GM10248 (cell line): ENCODE measurements at regions of chr11 and their contacts with region 1.

Region 1: GRCh38 chr11:65111744-65112414 is at the start of gene TM7SF2:
- DNase-seq: peak; percentile 98
- CTCF ChIP-seq: no peak

Region 2: DNA sequence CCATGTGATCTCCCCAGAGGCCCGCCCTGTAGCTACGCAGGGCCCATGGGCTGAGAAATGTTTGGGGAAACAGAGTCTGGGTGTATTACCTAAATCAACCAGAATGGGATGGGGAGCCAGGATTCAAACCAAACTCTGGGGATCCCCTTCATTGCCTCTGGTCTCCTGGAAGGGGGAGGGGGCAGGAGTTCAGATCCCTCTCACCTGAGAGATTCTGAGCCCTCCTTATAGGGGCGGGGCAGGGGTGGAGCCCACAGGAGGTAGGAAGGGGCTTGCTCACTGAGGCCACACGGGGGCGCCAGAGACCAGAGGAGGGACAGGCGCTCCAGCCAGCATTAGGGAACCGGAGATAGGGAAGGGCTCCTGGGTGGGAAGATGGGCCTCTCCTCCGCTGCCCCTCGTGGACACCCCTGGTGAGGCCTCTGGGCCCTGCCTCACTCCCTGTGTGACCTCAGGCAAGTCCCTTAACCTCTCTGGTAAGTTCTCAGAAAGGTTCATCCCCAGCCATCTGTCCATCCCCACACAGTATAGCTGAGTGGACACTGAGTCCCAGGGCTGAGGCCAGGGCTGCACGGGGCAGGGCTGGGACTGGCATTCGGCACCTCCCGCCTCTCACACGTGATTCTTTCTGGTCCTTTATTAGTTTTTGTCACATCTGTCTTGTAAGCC is 264.7 kb before region 1 on chr11:
- CTCF ChIA-PET with region 1: interaction called, 15 read pairs
- POLR2A ChIA-PET with region 1: no interaction called
- DNase-seq: peak; percentile 88
- CTCF ChIP-seq: peak; percentile 98

Region 3: GRCh38 chr11:65027213-65028067 is 84.4 kb before region 1 on chr11 and contains the start of gene SNX15:
- CTCF ChIA-PET with region 1: interaction called, 20 read pairs
- POLR2A ChIA-PET with region 1: no interaction called
- DNase-seq: peak; percentile 92
- CTCF ChIP-seq: peak; percentile 32

Region 4: GRCh38 chr11:65078151-65078550 is 33.7 kb before region 1 on chr11:
- CTCF ChIA-PET with region 1: interaction called, 19 read pairs
- POLR2A ChIA-PET with region 1: no interaction called
- DNase-seq: peak; percentile 73
- CTCF ChIP-seq: peak; percentile 78

Region 5: GRCh38 chr11:65090628-65091027 is 21.3 kb before region 1 on chr11:
- CTCF ChIA-PET with region 1: interaction called, 165 read pairs
- POLR2A ChIA-PET with region 1: interaction called, 6 read pairs
- DNase-seq: no peak
- CTCF ChIP-seq: no peak

Region 6: DNA sequence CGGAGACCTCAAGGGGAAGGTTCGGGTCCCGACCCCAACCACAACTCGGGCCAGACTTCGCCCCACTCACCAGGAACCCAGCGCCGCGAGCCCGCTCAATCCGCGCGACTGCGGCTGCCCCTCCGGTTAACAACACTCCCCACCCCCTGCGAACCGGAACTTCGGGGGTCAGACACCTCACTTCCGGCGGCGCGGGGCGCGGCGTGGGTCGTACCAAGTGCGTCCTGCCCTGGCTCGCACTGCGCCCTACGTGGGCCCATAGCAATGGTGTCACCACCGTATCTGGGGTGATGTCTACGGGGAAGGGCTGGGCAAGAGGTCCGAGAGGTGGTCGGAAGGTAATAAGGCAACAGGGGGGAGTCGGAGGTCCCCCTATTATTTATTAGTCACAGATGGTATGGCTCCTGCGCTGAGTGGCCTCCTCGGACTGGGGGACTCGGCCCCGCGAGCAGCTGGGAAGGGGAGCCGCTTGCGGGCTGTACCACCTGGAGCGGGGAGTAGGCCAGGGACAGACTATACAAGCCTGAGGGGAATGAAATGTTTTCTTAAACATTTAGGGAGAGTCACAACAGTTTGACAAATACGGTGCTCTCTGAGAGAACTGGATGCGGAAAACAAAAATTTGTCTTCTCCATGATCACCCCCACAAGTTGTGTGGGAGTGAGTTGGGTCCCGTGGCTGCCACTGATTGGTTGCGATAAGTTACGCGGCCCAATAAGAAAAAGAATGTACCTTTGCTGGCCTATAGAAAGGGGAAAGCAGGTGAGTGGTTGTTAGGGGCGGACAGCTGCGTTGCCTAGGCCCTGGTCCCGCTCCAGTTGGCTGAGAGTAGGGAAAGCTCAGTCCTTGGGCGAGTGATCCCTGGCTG is 22.7 kb after region 1 on chr11 and contains the start of gene SYVN1:
- CTCF ChIA-PET with region 1: interaction called, 24 read pairs
- POLR2A ChIA-PET with region 1: interaction called, 3 read pairs
- DNase-seq: peak; percentile 95
- CTCF ChIP-seq: no peak

Region 7: DNA sequence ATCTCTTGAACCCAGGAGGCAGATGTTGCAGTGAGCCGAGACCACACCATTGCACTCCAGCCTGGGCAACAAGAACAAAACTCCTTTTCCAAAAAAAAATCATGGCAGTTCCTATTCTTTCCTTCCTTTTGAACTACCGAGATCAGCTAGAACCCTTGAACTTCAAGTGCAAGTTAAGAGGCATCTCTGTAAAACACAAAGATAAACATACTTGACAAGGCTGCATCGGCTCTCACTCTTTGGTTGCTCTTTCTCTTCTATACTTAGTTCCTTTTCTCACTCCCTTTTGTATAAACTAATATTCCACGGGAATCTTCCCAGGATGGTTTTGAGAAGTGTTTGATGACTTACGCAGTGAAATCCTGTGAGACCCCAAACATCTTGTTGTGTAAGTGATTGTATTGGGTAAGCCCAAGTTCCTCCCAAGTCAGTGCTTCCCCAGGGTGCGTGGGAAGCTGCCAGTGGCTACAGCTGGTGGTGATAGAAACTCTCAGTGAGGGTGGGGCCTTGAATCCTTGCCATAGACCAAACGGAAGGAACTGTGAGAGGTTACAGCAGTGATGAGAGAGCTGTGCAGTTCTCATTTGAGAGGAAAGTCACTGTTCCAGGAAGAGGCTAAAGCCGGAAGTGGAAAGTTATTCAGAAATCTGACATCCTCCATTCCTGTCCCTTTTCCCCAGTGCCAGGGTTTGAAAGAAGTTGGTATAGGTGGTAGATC is 178.7 kb after region 1 on chr11:
- CTCF ChIA-PET with region 1: no interaction called
- POLR2A ChIA-PET with region 1: no interaction called
- DNase-seq: no peak
- CTCF ChIP-seq: no peak

Region 8: GRCh38 chr11:65314501-65315203 is 202.8 kb after region 1 on chr11 and contains the start of gene CDC42EP2:
- CTCF ChIA-PET with region 1: interaction called, 28 read pairs
- POLR2A ChIA-PET with region 1: interaction called, 4 read pairs
- DNase-seq: peak; percentile 94
- CTCF ChIP-seq: no peak